ENCODE measurements at regions of chr4 and their contacts with region 1.

Region 1: DNA sequence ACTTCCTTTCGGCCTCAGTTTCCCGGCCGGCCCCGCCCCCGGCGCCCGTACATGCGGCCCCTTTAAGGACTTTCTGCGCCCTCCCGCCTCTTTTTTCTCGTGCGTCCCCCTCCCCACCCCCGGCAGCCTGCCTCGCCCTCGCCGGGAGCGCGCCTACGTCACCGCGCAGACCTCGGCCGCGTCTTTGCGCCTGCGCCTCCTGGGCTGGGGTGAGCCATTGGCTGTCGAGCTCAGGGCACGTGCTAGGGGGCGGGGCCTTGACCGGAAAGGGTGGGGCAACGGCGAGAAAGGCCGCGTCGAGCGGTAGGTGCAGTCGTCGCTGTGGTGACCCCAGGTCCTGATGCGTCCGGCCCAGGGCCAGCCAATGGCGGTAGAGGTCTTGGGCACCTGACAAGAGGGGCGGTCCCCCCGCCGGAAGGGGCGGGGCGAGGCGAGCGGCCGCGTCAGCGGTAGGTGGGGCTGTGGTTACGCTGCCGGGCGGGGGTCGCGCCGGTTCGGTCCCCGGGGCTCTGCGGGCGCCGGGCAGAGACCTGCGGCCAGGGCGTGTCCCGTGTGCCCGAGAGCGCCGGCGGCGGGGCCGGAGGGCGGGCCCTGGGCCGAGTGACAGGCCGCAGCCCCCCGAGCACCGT is at the start of gene UVSSA:
- DNase-seq: peak; percentile 100
- H3K4me3 ChIP-seq: peak within 1 kb of the TSS; percentile 37 to 97 (median 80)
- H3K27ac ChIP-seq: peak within 1 kb of the TSS; percentile 82 to 98 (median 87)
- H3K4me1 ChIP-seq: peaks cover 8 to 16% of the 10 kb centered on the region in 2 donors
- H3K27me3 ChIP-seq: no peaks in the 10 kb centered on the region
- CTCF ChIP-seq: peak in 1 of 6 experiments; percentile 9
- POLR2A ChIP-seq: peak in 1 of 2 donors; percentile 93
- total RNA-seq, gene UVSSA: 16.7 to 38.7 (median 27.7) TPM

Region 2: DNA sequence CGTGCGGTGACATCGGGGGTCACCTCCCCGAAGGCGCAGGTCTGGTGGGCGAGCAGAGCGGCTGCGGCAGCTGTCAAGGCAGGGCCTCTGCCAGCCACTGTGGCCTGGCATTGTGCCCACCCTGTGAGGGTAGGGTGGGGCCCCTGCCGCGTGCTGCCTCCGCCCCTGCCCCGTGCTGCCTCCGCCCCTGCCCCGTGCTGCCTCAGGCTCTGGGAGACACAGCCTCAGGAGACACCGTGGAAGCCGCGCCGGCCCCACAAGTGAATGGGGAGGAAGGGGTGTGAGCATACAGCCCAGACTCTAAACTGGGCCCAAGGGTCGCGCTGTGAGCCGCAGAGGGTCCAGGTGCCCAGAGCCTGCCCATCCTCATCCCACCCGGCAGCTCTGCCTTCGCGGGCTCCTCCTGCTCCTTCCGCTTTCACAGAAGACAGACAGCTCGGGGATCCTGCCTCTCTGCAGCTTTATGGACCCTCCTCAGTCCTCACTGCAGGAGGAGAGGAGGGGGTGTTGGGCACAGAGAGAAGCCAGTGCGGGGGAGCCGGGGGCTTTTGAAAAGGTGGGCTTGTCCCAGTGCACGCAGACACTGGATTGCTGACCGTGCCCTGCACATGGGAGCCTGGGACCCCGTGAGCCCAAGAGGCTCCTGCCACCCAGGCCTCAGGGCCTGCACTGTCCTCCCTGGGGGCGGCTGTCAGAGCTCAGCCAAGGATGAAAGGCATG is 613.8 kb before region 1 on chr4:
- intact Hi-C with region 1: no loop called
- DNase-seq: no peak
- H3K4me3 ChIP-seq: no peak overlapping the region
- H3K27ac ChIP-seq: no peak overlapping the region
- H3K4me1 ChIP-seq: no peaks in the 10 kb centered on the region
- H3K27me3 ChIP-seq: no peaks in the 10 kb centered on the region
- CTCF ChIP-seq: no peak
- POLR2A ChIP-seq: no peak

Region 3: DNA sequence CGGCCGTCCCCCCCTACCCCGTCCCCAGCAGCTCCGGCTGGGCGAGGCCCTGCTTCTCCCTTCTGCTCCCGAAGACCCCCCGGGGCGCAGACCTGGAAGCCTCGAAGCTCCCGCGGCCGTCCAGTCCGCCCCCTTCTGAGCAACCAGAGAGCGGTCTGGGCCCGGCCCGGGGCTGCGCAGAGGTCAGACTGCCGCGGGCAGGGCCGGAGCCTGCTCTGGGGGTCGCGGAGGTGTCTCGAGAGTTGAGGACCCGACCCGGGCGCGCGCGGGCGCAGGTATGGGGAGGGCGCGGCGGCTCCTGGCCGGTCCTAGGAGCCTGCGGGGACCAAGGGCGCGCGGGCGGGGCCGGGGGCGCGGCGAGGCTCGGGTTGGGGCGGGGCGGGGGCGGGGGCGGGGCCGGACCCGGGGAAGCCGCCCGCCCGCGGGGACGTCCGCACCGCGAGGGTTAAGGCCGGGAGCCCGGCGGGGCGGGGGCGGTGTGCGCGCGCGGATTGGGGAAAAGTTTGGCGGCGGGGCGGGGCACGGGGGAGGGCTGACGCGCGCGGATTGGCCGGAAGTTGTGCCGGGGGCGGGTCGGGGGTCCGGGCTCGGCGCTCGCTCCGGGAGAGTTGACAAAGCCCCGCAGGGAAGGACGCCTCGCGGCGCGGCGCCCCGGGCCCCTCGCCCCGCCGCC is 335.7 kb before region 1 on chr4 and contains the start of gene FGFRL1:
- intact Hi-C with region 1: loop called (anchors 10 kb)
- DNase-seq: peak; percentile 94 to 96
- H3K4me3 ChIP-seq: peak within 1 kb of the TSS in 2 of 3 donors; percentile 60 to 67
- H3K27ac ChIP-seq: peak within 1 kb of the TSS; percentile 50 to 93 (median 74)
- H3K4me1 ChIP-seq: peaks cover 32 to 34% of the 10 kb centered on the region in 2 donors
- H3K27me3 ChIP-seq: no peaks in the 10 kb centered on the region
- CTCF ChIP-seq: no peak
- POLR2A ChIP-seq: peak in 1 of 2 donors; percentile 61
- total RNA-seq, gene FGFRL1: 59.0 to 93.9 (median 77.2) TPM

Region 4: DNA sequence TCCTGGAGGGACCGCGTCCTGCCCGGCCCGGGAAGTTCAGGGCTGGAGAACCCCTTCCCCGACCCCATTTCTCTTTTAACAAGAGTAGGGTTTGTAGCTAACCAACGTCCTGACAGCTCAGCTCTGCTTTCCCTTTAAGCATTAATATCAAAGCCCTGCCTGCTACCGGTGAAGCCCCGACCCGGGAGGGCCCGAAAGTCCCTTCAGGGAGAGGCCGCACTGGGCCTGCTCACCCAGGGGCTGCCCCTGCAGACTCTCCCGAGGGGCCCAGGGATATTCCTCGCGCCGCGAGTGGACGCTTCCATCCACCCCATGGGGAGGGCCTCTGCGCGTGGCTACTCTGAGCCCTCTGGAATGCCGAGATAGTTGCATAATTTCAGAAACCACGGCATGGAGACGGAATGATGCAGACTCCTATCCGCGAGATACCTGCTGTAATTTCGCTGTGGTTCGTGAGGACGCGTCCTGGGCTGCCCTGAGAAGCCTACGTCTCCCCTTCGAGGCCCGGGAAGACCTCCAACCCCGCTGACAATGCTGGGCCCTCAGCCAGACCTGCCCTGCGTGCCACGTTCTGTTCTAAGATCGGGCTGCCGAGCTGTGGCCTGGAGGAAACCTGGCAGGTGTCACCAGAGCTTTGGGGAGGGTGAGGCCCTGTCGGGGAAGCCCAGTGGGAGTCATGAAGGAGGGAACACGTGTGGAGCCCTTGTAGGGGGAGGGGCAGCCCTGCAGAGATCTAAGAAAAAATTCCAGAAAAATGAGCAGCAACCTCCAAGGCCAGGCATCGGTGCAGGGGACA is 97.0 kb before region 1 on chr4:
- intact Hi-C with region 1: loop called (anchors 2 kb)
- DNase-seq: peak; percentile 31 to 32
- H3K4me3 ChIP-seq: peak overlapping the region; percentile 72 to 95 (median 77)
- H3K27ac ChIP-seq: peak overlapping the region; percentile 86 to 94 (median 89)
- H3K4me1 ChIP-seq: peaks cover 28 to 39% of the 10 kb centered on the region in 2 donors
- H3K27me3 ChIP-seq: no peaks in the 10 kb centered on the region
- CTCF ChIP-seq: no peak
- POLR2A ChIP-seq: no peak

Region 5: GRCh38 chr4:1289207-1290164 is 57.4 kb before region 1 on chr4 and contains the start of gene MAEA:
- intact Hi-C with region 1: loop called (anchors 10 kb)
- DNase-seq: peak; percentile 97
- H3K4me3 ChIP-seq: peak within 1 kb of the TSS; percentile 69 to 89 (median 82)
- H3K27ac ChIP-seq: peak within 1 kb of the TSS; percentile 38 to 74 (median 68)
- H3K4me1 ChIP-seq: peaks cover 26 to 34% of the 10 kb centered on the region in 2 donors
- H3K27me3 ChIP-seq: no peaks in the 10 kb centered on the region
- CTCF ChIP-seq: no peak
- POLR2A ChIP-seq: peak in 1 of 2 donors; percentile 78
- total RNA-seq, gene MAEA: 85.3 to 99.5 (median 87.3) TPM

Region 6: DNA sequence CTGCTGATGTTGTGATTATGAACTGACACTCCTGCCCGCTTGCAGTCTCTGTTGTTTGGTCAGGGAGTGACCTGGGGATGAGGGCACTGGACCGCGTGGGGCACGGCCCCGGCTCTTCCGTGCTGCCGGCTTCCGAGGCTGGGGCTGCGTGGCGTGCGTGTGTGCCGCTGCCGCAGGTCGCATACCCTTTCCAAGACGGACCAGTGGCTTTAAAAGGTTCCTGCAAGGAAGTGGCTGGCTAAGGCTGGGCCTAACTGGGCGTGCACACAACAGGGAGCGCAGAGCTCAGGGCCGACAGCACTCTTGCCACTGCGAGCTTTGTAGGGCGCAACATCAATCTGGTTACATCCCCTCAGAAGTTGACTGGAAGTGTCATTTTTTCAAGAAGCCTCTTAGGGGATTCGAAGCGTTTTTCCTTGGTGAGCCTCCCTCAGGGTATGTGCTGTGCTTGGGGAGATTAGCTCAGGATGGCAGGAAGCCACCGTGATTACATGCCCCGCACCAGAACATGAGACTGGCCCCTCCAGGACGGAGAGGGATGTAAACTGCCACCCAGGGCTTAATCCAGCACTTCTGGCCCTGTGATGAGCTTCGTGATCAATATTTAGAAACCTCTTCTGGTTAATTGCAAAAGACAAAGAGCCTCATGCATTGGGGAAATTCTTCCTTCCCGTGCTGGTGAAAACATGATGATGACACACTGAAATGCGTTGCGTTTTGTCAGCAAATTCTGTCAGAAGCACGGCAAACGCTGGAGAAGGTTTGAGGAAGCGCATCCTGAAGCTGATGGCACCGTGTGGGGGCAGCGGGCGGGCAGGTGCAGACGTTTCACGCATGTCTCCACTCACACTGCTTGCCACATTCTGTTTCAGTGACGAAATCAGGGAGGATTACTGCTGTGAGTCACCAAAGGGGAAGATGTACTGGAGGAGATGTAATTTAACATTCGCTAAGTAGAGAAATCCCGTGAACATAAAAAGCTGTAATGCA is 46.1 kb before region 1 on chr4:
- intact Hi-C with region 1: no loop called
- DNase-seq: peak in 1 of 2 donors; percentile 22
- H3K4me3 ChIP-seq: no peak overlapping the region
- H3K27ac ChIP-seq: no peak overlapping the region
- H3K4me1 ChIP-seq: peaks cover 6 to 23% of the 10 kb centered on the region in 2 donors
- H3K27me3 ChIP-seq: no peaks in the 10 kb centered on the region
- CTCF ChIP-seq: no peak
- POLR2A ChIP-seq: no peak